PC-9 (cell line): ENCODE measurements at regions of chr14 and their contacts with region 1.

Region 1: DNA sequence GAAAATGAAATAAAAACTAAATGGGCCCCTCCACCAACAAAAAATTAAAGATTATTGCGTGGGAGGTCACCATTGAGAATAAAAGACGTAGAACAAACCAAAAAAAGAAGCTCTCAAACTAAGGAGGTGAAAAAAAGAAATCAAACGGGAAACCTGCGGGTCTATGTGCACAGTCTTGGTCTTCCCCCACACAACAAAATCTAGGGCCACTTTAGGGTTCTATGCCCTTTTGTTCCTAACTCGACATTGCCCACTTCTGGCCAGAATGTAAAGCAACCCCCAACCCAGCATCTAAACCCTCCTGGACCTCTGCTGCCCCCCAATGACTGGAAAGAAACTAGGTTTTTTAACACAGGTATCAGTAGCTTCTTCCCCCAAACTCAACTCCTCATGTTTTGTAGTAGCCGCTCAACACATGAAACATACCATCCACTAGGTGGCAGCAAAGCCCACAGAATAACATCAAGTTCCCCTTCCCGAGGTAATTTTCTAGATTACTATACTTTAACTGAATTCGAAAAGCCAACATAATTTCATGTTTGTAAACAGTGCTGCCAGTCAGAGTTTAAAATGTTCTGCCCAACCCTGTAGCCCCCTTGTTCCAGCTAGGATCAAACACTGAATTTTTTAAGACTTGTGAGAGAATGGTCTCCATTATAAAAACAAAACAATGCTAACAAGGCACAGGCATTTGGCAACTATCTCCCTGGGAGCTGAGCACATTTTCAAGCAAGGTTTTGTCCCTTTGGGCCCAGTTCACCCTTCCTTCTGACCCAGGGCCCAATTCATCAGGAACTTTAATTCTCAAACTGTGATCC is 18.7 kb downstream of the DAD1 start:
- DNase-seq: peak; percentile 55 to 70
- H3K4me3 ChIP-seq: no peak overlapping the region
- H3K27ac ChIP-seq: peak overlapping the region; percentile 49
- H3K4me1 ChIP-seq: peaks cover 7% of the 10 kb centered on the region; the same call in 1 of the 2 replicates
- H3K27me3 ChIP-seq: no peaks in the 10 kb centered on the region
- CTCF ChIP-seq: peak; percentile 85

Region 2: GRCh38 chr14:22386924-22387775 is 183.2 kb before region 1 on chr14:
- CTCF ChIA-PET with region 1: interaction called, 4 read pairs
- POLR2A ChIA-PET with region 1: no interaction called
- intact Hi-C with region 1: loop called (anchors 5 kb)
- DNase-seq: peak in 1 of 2 experiments; percentile 37
- H3K4me3 ChIP-seq: no peak overlapping the region
- H3K27ac ChIP-seq: no peak overlapping the region
- H3K4me1 ChIP-seq: peaks cover 47% of the 10 kb centered on the region
- H3K27me3 ChIP-seq: no peaks in the 10 kb centered on the region
- CTCF ChIP-seq: peak; percentile 81

Region 3: DNA sequence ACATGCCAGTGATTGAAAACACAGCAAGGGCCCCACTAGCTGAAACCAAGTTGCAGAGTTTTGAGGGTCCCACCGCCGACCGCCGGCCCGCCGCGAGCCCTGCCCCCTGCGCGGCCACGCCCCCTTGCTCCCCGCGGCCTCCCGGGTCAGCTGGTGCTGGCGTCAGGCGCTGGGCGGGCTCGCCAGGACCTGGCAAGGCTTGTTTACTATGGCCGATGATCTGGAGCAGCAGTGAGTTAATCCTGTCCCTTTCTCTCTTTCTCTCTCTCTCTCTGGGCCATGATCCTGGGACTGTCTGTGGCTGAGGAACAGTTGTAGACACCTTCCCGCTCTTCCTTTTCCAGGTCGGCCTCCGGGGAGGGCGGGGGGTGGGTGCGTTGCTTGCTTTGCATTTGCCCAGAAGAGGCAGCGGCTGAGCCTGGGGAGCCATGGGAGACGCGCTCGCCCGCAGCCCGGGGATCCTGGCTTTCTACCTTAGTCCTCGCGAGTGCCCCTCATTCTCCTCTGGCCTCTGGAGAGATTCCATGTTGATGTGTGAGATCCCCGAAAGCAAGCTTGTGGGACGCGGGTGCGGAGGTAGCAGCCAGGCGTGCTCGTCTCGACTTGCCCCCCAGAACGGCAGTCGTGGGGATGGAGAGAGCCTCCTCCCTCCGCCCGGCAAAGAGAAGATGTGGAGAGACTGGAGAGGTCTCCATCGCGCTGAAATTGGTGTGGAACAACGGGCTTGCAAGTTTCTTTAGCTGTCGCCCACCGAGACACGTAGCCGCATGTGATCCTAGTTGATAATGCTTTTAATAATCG is 28.0 kb after region 1 on chr14 and contains the start of gene ABHD4:
- CTCF ChIA-PET with region 1: interaction called, 3 read pairs
- POLR2A ChIA-PET with region 1: interaction called, 23 read pairs
- intact Hi-C with region 1: no loop called
- DNase-seq: peak; percentile 46 to 67
- H3K4me3 ChIP-seq: peak within 1 kb of the TSS; percentile 93
- H3K27ac ChIP-seq: peak within 1 kb of the TSS; percentile 93
- H3K4me1 ChIP-seq: peaks cover 64% of the 10 kb centered on the region
- H3K27me3 ChIP-seq: no peaks in the 10 kb centered on the region
- CTCF ChIP-seq: no peak
- total RNA-seq, gene ABHD4: 62.1 and 83.2 TPM in 2 replicates

Region 4: GRCh38 chr14:22646570-22647254 is 76.4 kb after region 1 on chr14:
- CTCF ChIA-PET with region 1: interaction called, 3 read pairs
- POLR2A ChIA-PET with region 1: interaction called, 19 read pairs
- intact Hi-C with region 1: loop called (anchors 2 kb)
- DNase-seq: peak in 1 of 2 experiments; percentile 82
- H3K4me3 ChIP-seq: no peak overlapping the region; the same call in 1 of the 2 replicates
- H3K27ac ChIP-seq: peak overlapping the region; percentile 100
- H3K4me1 ChIP-seq: peaks cover 65% of the 10 kb centered on the region
- H3K27me3 ChIP-seq: no peaks in the 10 kb centered on the region
- CTCF ChIP-seq: no peak

Region 5: GRCh38 chr14:22653012-22653621 is 82.8 kb after region 1 on chr14:
- CTCF ChIA-PET with region 1: interaction called, 10 read pairs
- POLR2A ChIA-PET with region 1: no interaction called
- intact Hi-C with region 1: loop called (anchors 1 kb)
- DNase-seq: peak; percentile 62 to 68
- H3K4me3 ChIP-seq: no peak overlapping the region
- H3K27ac ChIP-seq: no peak overlapping the region
- H3K4me1 ChIP-seq: peaks cover 36% of the 10 kb centered on the region
- H3K27me3 ChIP-seq: no peaks in the 10 kb centered on the region
- CTCF ChIP-seq: peak; percentile 77

Region 6: GRCh38 chr14:22781586-22781991 is 211.2 kb after region 1 on chr14:
- CTCF ChIA-PET with region 1: no interaction called
- POLR2A ChIA-PET with region 1: no interaction called
- intact Hi-C with region 1: loop called (anchors 5 kb)
- DNase-seq: no peak
- H3K4me3 ChIP-seq: no peak overlapping the region
- H3K27ac ChIP-seq: no peak overlapping the region
- H3K4me1 ChIP-seq: no peaks in the 10 kb centered on the region
- H3K27me3 ChIP-seq: no peaks in the 10 kb centered on the region
- CTCF ChIP-seq: no peak

Region 7: DNA sequence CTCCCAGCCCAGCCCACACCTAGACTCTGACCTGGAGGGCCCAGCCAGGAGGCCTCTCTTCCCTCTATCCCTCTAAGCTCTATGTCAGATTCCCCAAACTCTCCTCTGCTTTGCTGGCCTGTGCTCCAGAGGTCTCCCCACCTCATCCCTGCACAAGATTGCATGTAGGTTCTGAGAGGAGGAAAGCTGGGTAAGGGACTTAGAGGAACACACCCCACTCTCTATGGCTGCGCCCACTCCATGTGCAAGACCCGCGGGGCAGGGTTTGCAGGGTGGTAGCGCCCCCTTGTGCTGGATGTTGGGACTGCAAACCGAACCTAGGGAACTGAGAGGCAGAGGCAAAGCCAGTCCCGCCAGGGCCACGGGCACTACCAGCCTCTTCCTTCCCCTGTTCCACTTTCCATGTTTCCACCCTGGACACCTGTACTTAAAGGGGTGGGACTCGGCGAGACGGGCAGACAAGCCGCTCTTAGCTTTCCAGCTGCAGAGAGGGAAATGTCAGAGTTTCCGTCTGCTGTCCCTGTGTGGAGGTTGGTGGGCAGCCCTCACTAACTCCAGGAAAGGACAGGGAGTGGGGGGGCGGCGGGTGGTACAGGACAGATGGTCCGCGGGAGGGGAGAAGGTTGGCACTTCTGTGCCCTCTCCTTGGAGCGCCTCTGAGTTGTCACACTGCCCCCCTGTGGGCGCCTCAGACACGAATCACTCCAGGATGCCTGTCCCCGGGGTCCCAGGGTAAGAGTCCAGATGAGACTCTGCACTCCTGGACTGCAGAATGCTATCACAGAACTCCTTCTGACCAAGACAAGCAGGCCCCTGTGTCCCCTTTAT is 282.8 kb after region 1 on chr14:
- CTCF ChIA-PET with region 1: interaction called, 6 read pairs
- POLR2A ChIA-PET with region 1: no interaction called
- intact Hi-C with region 1: loop called (anchors 1 kb)
- DNase-seq: peak in 1 of 2 experiments; percentile 80
- H3K4me3 ChIP-seq: peak overlapping the region; percentile 48; the same call in 1 of the 2 replicates
- H3K27ac ChIP-seq: no peak overlapping the region
- H3K4me1 ChIP-seq: peaks cover 4% of the 10 kb centered on the region; the same call in 1 of the 2 replicates
- H3K27me3 ChIP-seq: no peaks in the 10 kb centered on the region
- CTCF ChIP-seq: peak; percentile 91